Endothelial cell of umbilical vein (primary cell): ENCODE measurements at regions of chr10 and their contacts with region 1.

Region 1: GRCh38 chr10:84328418-84329195 is at the start of gene CCSER2:
- DNase-seq: peak; percentile 92
- H3K4me3 ChIP-seq: peak within 1 kb of the TSS; percentile 52 to 90 (median 70)
- H3K27ac ChIP-seq: peak within 1 kb of the TSS; percentile 86
- H3K4me1 ChIP-seq: peaks cover 7% of the 10 kb centered on the region
- H3K27me3 ChIP-seq: no peaks in the 10 kb centered on the region
- CTCF ChIP-seq: peak in 1 of 2 donors; percentile 17
- POLR2A ChIP-seq: peak; percentile 74
- total RNA-seq, gene CCSER2: 49.3 and 50.8 TPM in 2 replicates

Region 2: GRCh38 chr10:83701799-83702198 is 626.8 kb before region 1 on chr10:
- CTCF ChIA-PET with region 1: no interaction called
- POLR2A ChIA-PET with region 1: no interaction called
- dilution Hi-C with region 1: no loop called
- intact Hi-C with region 1: no loop called
- DNase-seq: no peak
- H3K4me3 ChIP-seq: no peak overlapping the region
- H3K27ac ChIP-seq: no peak overlapping the region
- H3K4me1 ChIP-seq: no peaks in the 10 kb centered on the region
- H3K27me3 ChIP-seq: no peaks in the 10 kb centered on the region
- CTCF ChIP-seq: no peak
- POLR2A ChIP-seq: no peak

Region 3: GRCh38 chr10:84291384-84291783 is 37.2 kb before region 1 on chr10:
- CTCF ChIA-PET with region 1: interaction called, 11 read pairs
- POLR2A ChIA-PET with region 1: no interaction called
- dilution Hi-C with region 1: no loop called
- intact Hi-C with region 1: loop called (anchors 1 kb)
- DNase-seq: peak; percentile 55
- H3K4me3 ChIP-seq: no peak overlapping the region
- H3K27ac ChIP-seq: no peak overlapping the region
- H3K4me1 ChIP-seq: peaks cover 7% of the 10 kb centered on the region
- H3K27me3 ChIP-seq: peaks cover 8 to 19% of the 10 kb centered on the region in 2 experiments
- CTCF ChIP-seq: no peak
- POLR2A ChIP-seq: no peak

Region 4: DNA sequence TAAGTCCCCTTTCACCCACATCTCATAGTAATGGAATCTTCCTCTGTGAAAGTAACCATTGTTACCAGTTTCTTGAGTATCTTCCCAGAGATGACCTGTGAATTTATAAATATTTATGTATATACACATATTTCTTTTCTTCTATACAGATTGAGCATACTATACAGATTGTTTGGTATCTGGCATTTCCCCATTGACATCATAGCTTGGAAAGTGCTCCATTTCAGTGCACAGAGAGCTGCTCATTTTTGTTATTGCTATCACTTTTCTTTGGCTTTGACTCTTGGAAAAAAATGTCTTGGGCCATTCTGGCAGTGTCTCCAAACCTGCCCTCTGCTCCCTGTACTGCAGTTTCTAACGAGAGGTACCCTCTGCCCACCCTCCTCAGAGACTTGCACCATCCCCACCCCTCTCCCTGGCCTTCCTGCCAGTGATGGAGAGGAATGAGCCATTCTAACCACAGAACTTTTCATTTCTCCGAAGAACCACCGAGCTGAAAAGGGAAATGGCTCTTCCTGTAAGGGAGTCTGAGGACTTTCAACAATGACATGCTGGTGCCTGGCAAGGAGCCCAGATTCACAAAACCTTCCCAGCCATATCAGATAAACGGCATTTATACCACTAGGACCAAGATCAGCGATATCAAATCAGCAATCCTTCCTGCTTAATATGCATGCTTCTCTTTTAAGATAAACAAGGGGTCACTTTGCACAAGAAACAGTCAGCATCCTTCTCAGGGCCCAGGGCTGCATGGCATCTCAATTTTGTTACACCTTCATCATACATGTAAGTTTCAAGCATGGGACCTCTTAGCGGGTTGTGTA is 19.9 kb before region 1 on chr10:
- CTCF ChIA-PET with region 1: interaction called, 4 read pairs
- POLR2A ChIA-PET with region 1: no interaction called
- dilution Hi-C with region 1: no loop called
- intact Hi-C with region 1: loop called (anchors 2 kb)
- DNase-seq: peak; percentile 93
- H3K4me3 ChIP-seq: peak overlapping the region in 1 of 3 experiments; percentile 10
- H3K27ac ChIP-seq: peak overlapping the region; percentile 84
- H3K4me1 ChIP-seq: peaks cover 35% of the 10 kb centered on the region
- H3K27me3 ChIP-seq: no peaks in the 10 kb centered on the region
- CTCF ChIP-seq: no peak
- POLR2A ChIP-seq: no peak

Region 5: DNA sequence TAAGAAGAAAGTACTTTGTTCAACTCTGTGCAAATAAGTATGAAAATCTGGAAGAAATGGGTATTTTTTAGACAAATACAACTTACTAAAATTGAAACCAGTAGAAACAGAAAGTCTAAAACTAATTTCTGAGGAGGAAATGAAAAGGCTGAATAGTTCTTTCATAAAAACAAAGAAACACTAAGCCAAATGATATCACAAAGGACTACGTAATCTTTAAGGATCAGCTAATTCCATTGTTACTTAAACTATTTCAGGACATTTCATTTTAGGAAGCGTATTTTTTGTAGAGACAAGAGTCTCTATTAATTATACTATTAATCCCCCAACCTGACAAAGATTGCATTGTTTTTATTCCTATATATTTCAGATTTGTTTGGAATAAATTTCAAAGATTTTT is 11.4 kb before region 1 on chr10:
- CTCF ChIA-PET with region 1: interaction called, 11 read pairs
- POLR2A ChIA-PET with region 1: no interaction called
- dilution Hi-C with region 1: no loop called
- intact Hi-C with region 1: loop called (anchors 1 kb)
- DNase-seq: peak; percentile 32
- H3K4me3 ChIP-seq: no peak overlapping the region
- H3K27ac ChIP-seq: no peak overlapping the region
- H3K4me1 ChIP-seq: peaks cover 19% of the 10 kb centered on the region
- H3K27me3 ChIP-seq: no peaks in the 10 kb centered on the region
- CTCF ChIP-seq: no peak
- POLR2A ChIP-seq: no peak

Region 6: GRCh38 chr10:84352251-84352842 is 23.7 kb after region 1 on chr10:
- CTCF ChIA-PET with region 1: interaction called, 15 read pairs
- POLR2A ChIA-PET with region 1: interaction called, 3 read pairs
- dilution Hi-C with region 1: no loop called
- intact Hi-C with region 1: no loop called
- DNase-seq: peak; percentile 63
- H3K4me3 ChIP-seq: no peak overlapping the region
- H3K27ac ChIP-seq: no peak overlapping the region
- H3K4me1 ChIP-seq: peaks cover 7% of the 10 kb centered on the region
- H3K27me3 ChIP-seq: no peaks in the 10 kb centered on the region
- CTCF ChIP-seq: peak; percentile 66 to 78
- POLR2A ChIP-seq: no peak

Region 7: GRCh38 chr10:84375011-84375410 is 46.4 kb after region 1 on chr10:
- CTCF ChIA-PET with region 1: no interaction called
- POLR2A ChIA-PET with region 1: interaction called, 5 read pairs
- dilution Hi-C with region 1: no loop called
- intact Hi-C with region 1: loop called (anchors 2 kb)
- DNase-seq: peak; percentile 81
- H3K4me3 ChIP-seq: no peak overlapping the region
- H3K27ac ChIP-seq: no peak overlapping the region
- H3K4me1 ChIP-seq: no peaks in the 10 kb centered on the region
- H3K27me3 ChIP-seq: no peaks in the 10 kb centered on the region
- CTCF ChIP-seq: peak; percentile 41 to 52
- POLR2A ChIP-seq: no peak